Mammary epithelial cell (primary cell): ENCODE measurements at regions of chr10 and their contacts with region 1.

Region 1: GRCh38 chr10:17086865-17087367 is 42.7 kb downstream of the CUBN start:
- DNase-seq: no peak
- H3K4me3 ChIP-seq: no peak overlapping the region
- H3K27ac ChIP-seq: no peak overlapping the region
- H3K4me1 ChIP-seq: no peaks in the 10 kb centered on the region
- H3K27me3 ChIP-seq: no peaks in the 10 kb centered on the region
- CTCF ChIP-seq: no peak

Region 2: DNA sequence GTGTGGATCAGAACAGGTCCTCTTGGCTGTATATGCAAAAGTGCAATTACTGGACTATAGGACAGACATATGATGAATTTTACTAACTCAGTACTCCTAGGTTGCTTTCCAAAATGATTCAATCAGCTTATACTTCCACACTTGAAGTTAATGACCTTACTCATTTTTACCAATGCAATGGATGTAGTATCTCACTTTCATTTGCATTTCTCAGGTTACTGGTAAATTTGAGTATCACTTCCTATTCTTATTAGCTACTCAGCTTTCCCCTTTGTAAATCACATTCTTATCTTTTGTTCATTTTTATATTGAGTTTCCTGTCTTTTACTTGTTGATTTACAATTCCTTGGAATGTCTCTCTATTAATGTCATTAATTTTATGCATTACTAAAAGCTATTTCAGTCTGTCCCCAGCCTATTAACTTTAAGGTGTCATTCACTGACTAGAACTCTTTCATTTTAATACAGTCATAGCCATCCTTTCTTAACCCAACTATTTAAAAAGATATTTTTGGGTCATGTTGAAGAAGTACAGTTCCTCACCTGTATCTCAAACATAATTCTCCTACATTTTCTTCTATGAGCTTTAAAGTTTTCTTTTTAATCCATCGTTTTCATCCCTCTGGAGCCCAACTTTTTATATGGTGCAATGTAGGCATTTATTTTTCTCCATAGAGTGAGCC is 229.7 kb after region 1 on chr10:
- CTCF ChIA-PET with region 1: interaction called, 17 read pairs
- dilution Hi-C with region 1: no loop called
- in situ Hi-C with region 1: no loop called
- intact Hi-C with region 1: no loop called
- DNase-seq: no peak
- H3K4me3 ChIP-seq: no peak overlapping the region
- H3K27ac ChIP-seq: no peak overlapping the region
- H3K4me1 ChIP-seq: no peaks in the 10 kb centered on the region
- H3K27me3 ChIP-seq: no peaks in the 10 kb centered on the region
- CTCF ChIP-seq: no peak